GM12878 (cell line): ENCODE measurements at regions of chr15 and their contacts with region 1.

Region 1: DNA sequence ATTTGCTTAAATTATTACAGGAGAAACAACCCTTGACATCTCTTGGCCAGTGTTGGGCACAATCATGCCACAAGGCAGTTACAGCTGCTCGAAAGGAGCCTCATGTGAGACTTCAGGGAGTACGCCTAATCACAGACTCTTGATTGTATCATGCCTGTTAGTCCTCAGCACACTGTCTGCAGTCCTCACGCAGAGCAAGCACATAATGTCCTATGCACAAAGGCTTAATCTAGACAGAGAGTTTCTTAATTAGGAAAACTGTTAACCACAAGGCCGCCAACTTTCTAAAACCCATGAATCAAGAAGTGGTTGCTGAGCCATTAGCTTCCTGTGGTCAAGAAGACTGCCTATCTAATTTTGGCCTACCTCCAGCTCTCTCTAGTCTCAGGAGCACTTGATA is 172.0 kb downstream of the UNC13C start:
- DNase-seq: peak; percentile 69
- ATAC-seq: peak; percentile 96
- H3K4me3 ChIP-seq: no peak overlapping the region
- H3K27ac ChIP-seq: no peak overlapping the region
- H3K4me1 ChIP-seq: no peaks in the 10 kb centered on the region
- H3K27me3 ChIP-seq: no peaks in the 10 kb centered on the region
- CTCF ChIP-seq: no peak
- EP300 ChIP-seq: peak; percentile 95
- POLR2A ChIP-seq: no peak
- RAD21 ChIP-seq: peak; percentile 0; the same call in 1 of the 2 replicates

Region 2: DNA sequence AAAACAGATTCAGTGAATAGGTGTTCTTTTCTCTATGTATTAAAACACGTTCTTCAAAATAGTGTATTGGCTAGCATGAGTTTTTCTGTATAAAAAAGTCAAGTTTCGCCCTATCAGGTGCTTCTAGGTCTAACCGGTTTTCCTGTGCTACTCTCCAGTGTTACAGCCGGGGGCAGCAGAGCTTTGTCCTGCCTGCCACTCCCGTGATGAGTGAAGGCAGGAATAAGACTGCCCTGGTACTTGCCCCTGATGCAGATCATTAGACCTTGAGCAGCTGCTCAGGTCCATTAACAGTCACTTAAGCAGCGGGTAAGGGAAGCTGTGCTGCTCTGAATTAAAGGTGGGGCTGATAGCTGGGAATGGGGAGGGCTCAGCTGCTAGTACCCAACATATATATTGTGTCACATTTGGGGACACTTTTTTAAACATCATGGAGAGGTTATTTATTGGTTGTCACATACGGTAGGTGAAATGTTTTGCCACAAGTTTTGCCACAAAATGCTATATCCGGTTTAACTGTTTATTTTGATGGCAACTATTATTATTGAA is 173.3 kb before region 1 on chr15:
- CTCF ChIA-PET with region 1: interaction called, 3 read pairs
- POLR2A ChIA-PET with region 1: no interaction called
- RAD21 ChIA-PET with region 1: interaction called, 9 read pairs
- SMC1A ChIA-PET with region 1: interaction called, 9 read pairs
- in situ Hi-C with region 1: no loop called
- intact Hi-C with region 1: loop called (anchors 10 kb)
- DNase-seq: no peak
- ATAC-seq: peak; percentile 72
- H3K4me3 ChIP-seq: no peak overlapping the region
- H3K27ac ChIP-seq: no peak overlapping the region
- H3K4me1 ChIP-seq: no peaks in the 10 kb centered on the region
- H3K27me3 ChIP-seq: no peaks in the 10 kb centered on the region
- CTCF ChIP-seq: peak in 2 of 3 experiments; percentile 34 to 62; a peak in 2 of 6 replicates
- EP300 ChIP-seq: no peak
- POLR2A ChIP-seq: no peak
- RAD21 ChIP-seq: peak; percentile 24; the same call in 1 of the 2 replicates

Region 3: DNA sequence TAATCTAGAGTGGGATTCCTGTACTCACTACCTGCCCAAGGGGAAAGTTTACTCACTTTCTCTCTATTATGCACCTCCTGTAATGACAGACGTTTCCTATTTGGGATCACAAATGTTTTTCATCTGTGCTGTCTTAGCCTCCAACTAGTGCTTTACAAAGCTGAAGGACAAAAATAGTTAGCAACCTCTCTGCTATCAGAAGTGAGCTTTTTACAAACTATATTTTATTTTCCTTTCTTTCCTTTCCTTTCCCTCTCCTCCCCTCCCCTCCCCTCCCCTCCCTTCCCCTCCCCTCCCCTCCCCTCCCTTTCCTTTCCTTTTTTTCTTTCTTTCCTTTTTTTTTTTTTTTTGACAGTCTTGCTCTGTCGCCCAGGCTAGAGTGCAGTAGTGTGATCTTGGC is 41.2 kb before region 1 on chr15:
- CTCF ChIA-PET with region 1: no interaction called
- POLR2A ChIA-PET with region 1: interaction called, 3 read pairs
- RAD21 ChIA-PET with region 1: interaction called, 4 read pairs
- SMC1A ChIA-PET with region 1: interaction called, 13 read pairs
- in situ Hi-C with region 1: no loop called
- intact Hi-C with region 1: no loop called
- DNase-seq: no peak
- ATAC-seq: no peak
- H3K4me3 ChIP-seq: no peak overlapping the region
- H3K27ac ChIP-seq: no peak overlapping the region
- H3K4me1 ChIP-seq: no peaks in the 10 kb centered on the region
- H3K27me3 ChIP-seq: no peaks in the 10 kb centered on the region
- CTCF ChIP-seq: no peak
- EP300 ChIP-seq: no peak
- POLR2A ChIP-seq: no peak
- RAD21 ChIP-seq: no peak

Region 4: DNA sequence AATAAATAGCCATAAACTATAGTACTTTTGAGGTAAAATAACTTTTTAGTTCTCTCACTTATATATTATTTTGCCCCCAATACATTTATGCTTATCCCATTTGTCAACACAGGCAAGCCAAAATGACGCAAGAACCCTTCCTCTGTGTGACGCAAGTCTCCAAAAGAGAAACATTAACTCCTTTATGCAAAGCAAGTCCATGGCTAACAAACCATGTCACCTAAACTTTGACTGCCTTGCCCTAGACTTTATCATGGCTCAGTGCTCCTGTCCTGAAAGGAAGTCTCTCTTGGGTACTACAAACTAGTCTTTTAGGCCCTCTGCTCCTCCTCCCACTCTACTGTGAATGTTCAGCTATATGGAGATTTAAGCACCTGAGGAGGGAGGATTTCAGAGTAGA is 58.5 kb after region 1 on chr15:
- CTCF ChIA-PET with region 1: interaction called, 3 read pairs
- POLR2A ChIA-PET with region 1: no interaction called
- RAD21 ChIA-PET with region 1: no interaction called
- SMC1A ChIA-PET with region 1: interaction called, 11 read pairs
- in situ Hi-C with region 1: no loop called
- intact Hi-C with region 1: no loop called
- DNase-seq: no peak
- ATAC-seq: no peak
- H3K4me3 ChIP-seq: no peak overlapping the region
- H3K27ac ChIP-seq: no peak overlapping the region
- H3K4me1 ChIP-seq: no peaks in the 10 kb centered on the region
- H3K27me3 ChIP-seq: no peaks in the 10 kb centered on the region
- CTCF ChIP-seq: no peak
- EP300 ChIP-seq: no peak
- POLR2A ChIP-seq: no peak
- RAD21 ChIP-seq: no peak

Region 5: GRCh38 chr15:54502416-54503075 is 352.3 kb after region 1 on chr15:
- CTCF ChIA-PET with region 1: no interaction called
- POLR2A ChIA-PET with region 1: no interaction called
- RAD21 ChIA-PET with region 1: interaction called, 3 read pairs
- SMC1A ChIA-PET with region 1: interaction called, 10 read pairs
- in situ Hi-C with region 1: no loop called
- intact Hi-C with region 1: loop called (anchors 5 kb)
- DNase-seq: no peak
- ATAC-seq: peak; percentile 44
- H3K4me3 ChIP-seq: no peak overlapping the region
- H3K27ac ChIP-seq: no peak overlapping the region
- H3K4me1 ChIP-seq: no peaks in the 10 kb centered on the region
- H3K27me3 ChIP-seq: no peaks in the 10 kb centered on the region
- CTCF ChIP-seq: no peak
- EP300 ChIP-seq: no peak
- POLR2A ChIP-seq: no peak
- RAD21 ChIP-seq: no peak